CD14-positive monocyte (primary cell): ENCODE measurements at regions of chr14 and their contacts with region 1.

Region 1: DNA sequence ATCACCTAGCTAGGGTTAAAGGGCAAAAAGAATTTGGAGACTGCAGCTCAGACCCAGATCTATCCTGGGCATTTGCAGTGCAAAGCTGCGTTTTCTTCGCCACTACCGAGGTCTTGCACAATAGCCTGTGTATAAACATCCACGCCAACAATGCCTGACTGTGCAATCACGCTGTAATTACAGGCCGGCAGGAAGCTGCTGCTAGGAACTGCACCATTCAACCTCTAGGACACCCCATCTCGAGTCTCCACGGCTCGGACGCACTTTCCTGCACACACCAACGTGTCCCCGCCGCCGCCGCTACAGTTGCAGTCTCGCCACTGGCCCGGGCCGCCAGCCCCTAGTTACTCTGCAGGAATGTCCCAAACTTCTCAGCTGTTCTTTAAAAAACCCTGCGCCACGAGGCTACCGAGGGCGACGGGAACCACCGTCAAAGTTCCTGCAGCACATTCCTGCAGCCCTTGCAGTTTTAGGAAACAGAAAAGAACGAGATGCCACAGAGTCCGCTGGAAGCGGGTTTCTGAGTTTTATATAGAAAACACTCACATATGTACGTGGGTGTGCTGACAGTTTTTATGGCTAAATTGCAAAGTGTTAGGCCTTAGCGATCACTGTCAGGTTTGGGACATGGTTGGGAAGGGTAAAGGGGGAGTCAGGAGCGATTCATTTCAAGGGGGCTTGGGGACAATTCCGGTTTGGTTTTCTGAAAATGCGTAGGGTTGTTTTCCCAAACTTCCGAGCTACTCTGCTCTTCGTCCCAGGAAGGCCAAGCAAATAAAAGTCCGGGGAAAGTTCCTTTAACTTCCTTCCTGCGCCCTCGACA is 65.5 kb upstream of the PTGR2 start:
- DNase-seq: peak; percentile 87 to 90 (median 88)
- H3K4me3 ChIP-seq: peak overlapping the region; percentile 49 to 81 (median 79)
- H3K4me3 Mint-ChIP-seq: peak overlapping the region; percentile 85 to 92
- H3K27ac ChIP-seq: peak overlapping the region; percentile 69 to 95
- H3K27ac Mint-ChIP-seq: peak overlapping the region; percentile 93 to 97 (median 95)
- H3K4me1 ChIP-seq: peaks cover 49 to 63% of the 10 kb centered on the region in 2 donors
- H3K4me1 Mint-ChIP-seq: peaks cover 68% of the 10 kb centered on the region
- H3K27me3 ChIP-seq: no peaks in the 10 kb centered on the region
- H3K27me3 Mint-ChIP-seq: peaks cover 0 to 2% (median 1%) of the 10 kb centered on the region in 3 donors
- CTCF ChIP-seq: peak; percentile 17

Region 2: DNA sequence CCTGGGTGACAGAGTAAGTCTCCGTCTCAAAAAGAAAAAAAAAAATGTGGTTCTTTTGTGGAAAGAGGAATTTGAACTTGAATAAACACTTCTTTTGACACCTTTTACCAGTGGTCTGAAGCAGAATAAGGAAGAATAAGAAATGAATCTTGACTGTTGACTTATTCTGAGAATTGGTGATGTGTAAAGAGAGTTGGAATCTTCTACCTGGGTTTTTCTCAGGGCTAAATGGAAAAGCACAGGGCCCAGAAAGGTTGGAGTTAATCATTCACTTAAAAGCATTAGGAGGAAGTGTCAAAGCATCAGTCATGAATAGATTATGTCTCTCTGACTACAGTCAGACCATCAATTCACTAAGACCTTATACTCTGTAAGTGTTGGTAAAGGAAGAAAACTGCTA is 85.8 kb before region 1 on chr14:
- intact Hi-C with region 1: no loop called
- DNase-seq: no peak
- H3K4me3 ChIP-seq: no peak overlapping the region
- H3K4me3 Mint-ChIP-seq: no peak overlapping the region
- H3K27ac ChIP-seq: no peak overlapping the region
- H3K27ac Mint-ChIP-seq: no peak overlapping the region
- H3K4me1 ChIP-seq: peaks cover 0 to 6% of the 10 kb centered on the region in 2 donors
- H3K4me1 Mint-ChIP-seq: peaks cover 12% of the 10 kb centered on the region
- H3K27me3 ChIP-seq: no peaks in the 10 kb centered on the region
- H3K27me3 Mint-ChIP-seq: peaks cover 0 to 5% (median 0%) of the 10 kb centered on the region in 3 donors
- CTCF ChIP-seq: no peak

Region 3: DNA sequence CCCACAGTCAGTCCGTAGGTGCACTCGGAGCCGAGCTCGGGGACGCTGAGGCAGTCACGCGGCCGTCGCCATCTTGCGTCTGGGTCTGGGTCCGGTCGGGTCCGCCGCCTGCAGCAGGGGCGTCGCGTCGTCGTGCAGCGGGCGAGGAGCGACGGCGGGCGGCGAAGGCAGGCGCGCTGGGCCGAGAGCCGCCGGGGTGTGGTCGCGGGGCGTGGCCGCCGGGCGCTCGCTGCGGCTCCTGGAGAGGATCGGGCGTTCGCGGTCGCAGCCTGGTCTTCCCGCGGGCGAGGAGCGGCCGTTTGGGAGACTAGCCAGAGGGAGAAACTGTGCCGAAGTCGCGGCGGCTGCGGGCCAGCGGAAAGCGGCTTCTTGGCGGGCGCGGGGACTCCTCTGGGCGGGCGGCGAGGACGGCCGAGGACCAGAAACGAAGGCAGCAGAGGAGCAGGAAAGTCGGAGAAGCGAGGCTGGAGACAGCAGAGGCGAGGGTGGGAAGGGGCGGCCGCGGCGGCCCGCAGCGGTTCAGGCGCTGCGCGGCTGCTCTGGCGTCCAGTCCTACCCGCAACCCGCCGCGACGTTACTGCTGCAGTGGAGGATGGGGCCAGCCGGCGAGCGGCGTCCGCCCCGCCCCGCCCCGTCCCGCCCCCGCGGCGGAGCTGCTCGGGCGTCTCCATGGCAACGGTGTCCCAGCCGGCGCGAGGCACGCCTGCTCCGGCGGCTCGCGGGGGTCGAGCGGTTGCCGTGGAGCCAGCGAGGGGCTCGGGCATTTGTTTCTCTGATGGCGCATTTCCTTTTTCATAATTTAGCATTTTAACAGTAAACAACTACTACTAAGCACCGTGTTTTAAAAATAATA is 72.1 kb before region 1 on chr14 and contains the start of gene PNMA1:
- intact Hi-C with region 1: no loop called
- DNase-seq: peak; percentile 50 to 76 (median 74)
- H3K4me3 ChIP-seq: peak within 1 kb of the TSS; percentile 58 to 84 (median 72)
- H3K4me3 Mint-ChIP-seq: peak within 1 kb of the TSS; percentile 94 to 98
- H3K27ac ChIP-seq: peak within 1 kb of the TSS in 1 of 2 donors; percentile 5
- H3K27ac Mint-ChIP-seq: peak within 1 kb of the TSS in 6 of 7 donors; percentile 61 to 80 (median 72)
- H3K4me1 ChIP-seq: peaks cover 21 to 31% of the 10 kb centered on the region in 2 donors
- H3K4me1 Mint-ChIP-seq: peaks cover 24% of the 10 kb centered on the region
- H3K27me3 ChIP-seq: peaks cover 9 to 23% of the 10 kb centered on the region in 2 donors
- H3K27me3 Mint-ChIP-seq: peaks cover 18% of the 10 kb centered on the region in 3 donors
- CTCF ChIP-seq: no peak
- polyA plus RNA-seq, gene PNMA1: 2.4 to 6.4 (median 4.4) TPM

Region 4: DNA sequence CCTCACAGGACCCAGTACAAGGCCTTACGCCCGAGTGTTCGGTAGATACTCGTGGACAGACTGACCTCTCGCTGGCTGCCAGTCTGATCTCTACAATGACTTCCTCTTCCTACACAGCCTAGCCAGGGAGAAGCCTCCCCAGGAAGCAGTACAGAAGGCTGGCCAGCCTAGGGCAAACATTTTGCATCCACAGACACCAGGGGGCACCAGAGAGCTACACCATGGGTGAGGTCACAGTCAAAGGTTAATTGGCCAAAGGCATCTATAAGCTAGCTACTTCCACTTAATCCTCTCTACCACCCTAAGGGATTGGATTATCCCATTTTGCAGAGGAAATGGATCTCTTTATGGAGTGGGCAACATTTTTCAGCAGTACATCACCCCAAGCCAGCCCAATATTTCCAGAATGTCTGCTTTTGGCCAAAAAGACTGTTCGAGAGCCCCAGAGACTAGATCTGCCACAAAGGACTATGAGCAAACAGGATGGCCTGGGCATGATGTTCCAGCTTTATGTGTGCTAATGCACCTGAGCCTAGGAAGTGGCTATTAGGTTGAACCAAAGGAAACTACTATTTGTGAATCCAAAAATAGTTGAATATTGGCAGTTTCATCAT is 57.3 kb before region 1 on chr14:
- intact Hi-C with region 1: no loop called
- DNase-seq: peak; percentile 91 to 94 (median 91)
- H3K4me3 ChIP-seq: no peak overlapping the region
- H3K4me3 Mint-ChIP-seq: peak overlapping the region; percentile 20 to 69
- H3K27ac ChIP-seq: peak overlapping the region; percentile 22 to 35
- H3K27ac Mint-ChIP-seq: peak overlapping the region; percentile 75 to 93 (median 88)
- H3K4me1 ChIP-seq: peaks cover 39 to 51% of the 10 kb centered on the region in 2 donors
- H3K4me1 Mint-ChIP-seq: peaks cover 44% of the 10 kb centered on the region
- H3K27me3 ChIP-seq: no peaks in the 10 kb centered on the region
- H3K27me3 Mint-ChIP-seq: peaks cover 0 to 2% (median 0%) of the 10 kb centered on the region in 3 donors
- CTCF ChIP-seq: peak; percentile 93

Region 5: DNA sequence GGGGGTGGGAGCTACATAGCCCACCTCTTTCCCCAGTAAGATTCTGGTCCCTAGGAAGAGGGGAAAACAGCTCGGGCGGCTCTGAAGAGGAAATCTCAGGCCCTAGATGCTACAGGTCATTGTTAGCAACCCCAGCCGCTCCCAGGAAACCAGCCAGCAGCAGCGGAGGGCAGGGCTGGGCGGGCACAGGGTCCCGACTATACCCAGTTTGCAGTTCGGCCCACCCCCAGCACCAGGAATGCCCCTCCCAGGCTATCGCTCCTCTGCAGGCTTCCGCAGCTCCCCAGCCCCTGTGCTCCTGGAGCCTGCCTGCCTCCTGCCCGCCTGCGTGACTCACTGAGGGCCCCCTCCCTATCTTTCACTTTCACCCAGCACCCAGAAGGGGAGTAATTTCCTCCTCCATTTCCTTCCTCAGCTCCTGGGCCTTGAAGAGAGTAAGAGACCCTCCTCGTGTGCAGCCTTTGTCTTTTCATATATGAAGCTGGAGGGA is 44.7 kb before region 1 on chr14:
- intact Hi-C with region 1: loop called (anchors 5 kb)
- DNase-seq: peak; percentile 70 to 84 (median 78)
- H3K4me3 ChIP-seq: peak overlapping the region; percentile 24 to 71 (median 26)
- H3K4me3 Mint-ChIP-seq: peak overlapping the region; percentile 63 to 80
- H3K27ac ChIP-seq: peak overlapping the region; percentile 78 to 93
- H3K27ac Mint-ChIP-seq: peak overlapping the region; percentile 88 to 94 (median 92)
- H3K4me1 ChIP-seq: peaks cover 68 to 76% of the 10 kb centered on the region in 2 donors
- H3K4me1 Mint-ChIP-seq: peaks cover 72% of the 10 kb centered on the region
- H3K27me3 ChIP-seq: no peaks in the 10 kb centered on the region
- H3K27me3 Mint-ChIP-seq: peaks cover 0 to 3% (median 0%) of the 10 kb centered on the region in 3 donors
- CTCF ChIP-seq: no peak

Region 6: DNA sequence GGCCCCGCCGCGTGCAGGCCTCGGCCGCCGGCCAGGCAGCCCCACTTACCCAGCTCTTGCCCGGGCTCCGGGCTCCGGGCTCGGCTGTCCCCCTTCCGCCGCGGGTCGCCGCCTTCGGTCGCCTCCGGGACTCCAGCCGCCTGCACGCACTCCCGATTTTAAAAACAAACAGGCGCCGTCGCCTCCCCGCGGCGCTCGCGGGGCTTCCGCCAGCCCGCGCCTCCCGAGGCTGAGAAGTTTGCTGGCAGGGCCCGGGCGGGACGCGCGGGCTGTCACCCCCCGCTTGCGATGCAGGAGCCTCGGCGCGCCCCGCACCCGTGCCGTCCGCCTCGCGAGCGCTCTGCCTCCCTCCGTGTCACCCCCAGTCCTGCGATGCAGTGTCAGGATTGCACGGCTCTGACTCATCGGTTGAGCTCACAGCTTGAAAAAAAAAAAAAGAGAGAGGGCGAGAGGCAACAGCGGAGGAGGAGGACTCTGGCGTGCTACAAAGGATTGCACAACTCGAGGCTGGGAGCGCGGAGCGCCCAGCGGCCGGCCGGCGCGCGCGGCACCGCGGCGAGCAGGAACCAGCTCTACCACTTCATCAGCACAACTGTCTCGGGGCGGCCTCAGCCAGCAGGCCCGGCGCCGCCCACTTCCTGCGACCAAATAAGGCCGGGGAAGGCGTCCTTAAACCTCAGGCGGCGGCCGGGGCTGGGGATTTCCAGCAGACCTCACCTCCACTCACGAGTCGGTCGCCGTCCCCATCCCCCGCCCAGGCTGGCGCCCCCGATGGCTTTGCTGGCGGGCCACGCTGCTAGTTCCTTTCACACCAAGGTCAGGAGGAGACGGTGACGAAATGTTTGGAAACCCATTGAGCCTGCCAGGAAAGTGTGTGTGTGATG is 26.1 kb before region 1 on chr14:
- intact Hi-C with region 1: loop called in 1 of 2 experiments (anchors 2 kb)
- DNase-seq: peak; percentile 97 to 99 (median 98)
- H3K4me3 ChIP-seq: peak overlapping the region; percentile 25 to 77 (median 74)
- H3K4me3 Mint-ChIP-seq: peak overlapping the region; percentile 77 to 86
- H3K27ac ChIP-seq: peak overlapping the region; percentile 90 to 98
- H3K27ac Mint-ChIP-seq: peak overlapping the region; percentile 96 to 99 (median 98)
- H3K4me1 ChIP-seq: peaks cover 82 to 90% of the 10 kb centered on the region in 2 donors
- H3K4me1 Mint-ChIP-seq: peaks cover 83% of the 10 kb centered on the region
- H3K27me3 ChIP-seq: no peaks in the 10 kb centered on the region
- H3K27me3 Mint-ChIP-seq: peaks cover 0 to 2% (median 0%) of the 10 kb centered on the region in 3 donors
- CTCF ChIP-seq: no peak

Region 7: DNA sequence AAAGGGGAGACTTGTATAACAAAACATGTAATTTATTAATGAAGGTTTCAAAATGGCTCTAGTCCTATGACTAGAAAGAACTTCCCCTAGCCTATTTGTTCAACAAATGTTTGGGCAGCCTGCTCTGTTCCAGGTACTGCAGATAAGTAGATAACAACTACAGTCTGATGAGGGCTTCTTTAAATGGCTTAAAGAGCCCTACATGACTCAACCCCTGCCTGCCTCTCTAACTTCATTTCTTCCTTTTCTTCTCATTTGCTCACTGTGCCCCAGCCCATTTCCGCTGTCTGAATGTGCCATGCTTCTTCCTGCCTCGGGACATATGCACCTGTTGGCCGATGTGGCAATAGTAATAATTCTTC is 276.7 kb after region 1 on chr14:
- intact Hi-C with region 1: no loop called
- DNase-seq: no peak
- H3K4me3 ChIP-seq: no peak overlapping the region
- H3K4me3 Mint-ChIP-seq: no peak overlapping the region
- H3K27ac ChIP-seq: no peak overlapping the region
- H3K27ac Mint-ChIP-seq: no peak overlapping the region
- H3K4me1 ChIP-seq: no peaks in the 10 kb centered on the region
- H3K4me1 Mint-ChIP-seq: peaks cover 7% of the 10 kb centered on the region
- H3K27me3 ChIP-seq: no peaks in the 10 kb centered on the region
- H3K27me3 Mint-ChIP-seq: peaks cover 0 to 2% (median 0%) of the 10 kb centered on the region in 3 donors
- CTCF ChIP-seq: no peak